ENCODE measurements at regions of chr16 and their contacts with region 1.

Region 1: GRCh38 chr16:54286090-54286993 is at the start of gene IRX3:
- DNase-seq: peak; percentile 95
- H3K4me3 ChIP-seq: peak within 1 kb of the TSS; percentile 80 to 99 (median 89)
- H3K27ac ChIP-seq: peak within 1 kb of the TSS; percentile 97 to 100
- H3K4me1 ChIP-seq: peaks cover 0 to 5% of the 10 kb centered on the region in 2 donors
- H3K27me3 ChIP-seq: no peaks in the 10 kb centered on the region
- CTCF ChIP-seq: no peak
- POLR2A ChIP-seq: peak; percentile 74
- total RNA-seq, gene IRX3: 18.4 to 127 (median 56.7) TPM

Region 2: DNA sequence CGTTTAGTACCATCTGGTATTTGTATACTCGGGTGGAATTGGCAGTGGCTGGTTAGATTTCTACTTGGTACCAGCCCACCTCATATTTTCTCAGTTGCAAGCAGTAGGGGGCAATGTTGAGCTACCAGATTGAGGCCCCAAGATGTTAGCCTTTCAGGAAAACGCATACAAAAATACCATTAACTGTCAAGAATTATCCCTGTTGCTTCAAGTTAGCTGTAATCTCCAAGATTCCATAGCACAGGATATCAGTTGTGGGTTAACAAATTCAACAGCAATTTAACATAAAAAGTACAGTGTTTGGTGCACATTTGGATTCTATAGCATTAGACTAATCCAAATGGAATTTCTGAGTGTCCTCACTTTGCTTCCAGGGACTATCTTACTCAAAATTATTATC is 394.2 kb before region 1 on chr16:
- intact Hi-C with region 1: loop called (anchors 10 kb)
- DNase-seq: peak; percentile 53 to 55
- H3K4me3 ChIP-seq: no peak overlapping the region
- H3K27ac ChIP-seq: peak overlapping the region; percentile 36 to 67
- H3K4me1 ChIP-seq: peaks cover 0 to 6% of the 10 kb centered on the region in 2 donors
- H3K27me3 ChIP-seq: no peaks in the 10 kb centered on the region
- CTCF ChIP-seq: peak; percentile 63 to 81 (median 77)
- POLR2A ChIP-seq: no peak

Region 3: GRCh38 chr16:54015147-54015546 is 271.2 kb before region 1 on chr16:
- intact Hi-C with region 1: loop called (anchors 10 kb)
- DNase-seq: no peak
- H3K4me3 ChIP-seq: no peak overlapping the region
- H3K27ac ChIP-seq: no peak overlapping the region
- H3K4me1 ChIP-seq: no peaks in the 10 kb centered on the region
- H3K27me3 ChIP-seq: no peaks in the 10 kb centered on the region
- CTCF ChIP-seq: no peak
- POLR2A ChIP-seq: no peak

Region 4: GRCh38 chr16:54936979-54937670 is 650.8 kb after region 1 on chr16:
- intact Hi-C with region 1: loop called (anchors 1 kb)
- DNase-seq: peak; percentile 81 to 83
- H3K4me3 ChIP-seq: peak overlapping the region; percentile 81 to 95 (median 88)
- H3K27ac ChIP-seq: peak overlapping the region; percentile 97 to 98
- H3K4me1 ChIP-seq: peaks cover 0 to 5% of the 10 kb centered on the region in 2 donors
- H3K27me3 ChIP-seq: peaks cover 0 to 3% of the 10 kb centered on the region in 2 donors
- CTCF ChIP-seq: peak; percentile 82 to 93 (median 91)
- POLR2A ChIP-seq: no peak

Measured in breast epithelium (tissue), 4 donors.